CD8-positive, alpha-beta memory T cell (primary cell): ENCODE measurements at regions of chr14 and their contacts with region 1.

Region 1: GRCh38 chr14:101809671-101810514 is 48.4 kb downstream of the PPP2R5C start:
- DNase-seq: peak; percentile 71 to 94 (median 92)
- H3K4me3 ChIP-seq: peak overlapping the region; percentile 94
- H3K4me3 Mint-ChIP-seq: peak overlapping the region; percentile 90 to 99 (median 95)
- H3K27ac ChIP-seq: peak overlapping the region; percentile 99
- H3K27ac Mint-ChIP-seq: peak overlapping the region; percentile 89 to 100 (median 98)
- H3K4me1 ChIP-seq: peaks cover 36% of the 10 kb centered on the region
- H3K4me1 Mint-ChIP-seq: peaks cover 45 to 71% (median 58%) of the 10 kb centered on the region in 3 donors
- H3K27me3 ChIP-seq: no peaks in the 10 kb centered on the region
- H3K27me3 Mint-ChIP-seq: peaks cover 0 to 2% of the 10 kb centered on the region in 2 donors

Region 2: GRCh38 chr14:101721951-101722661 is 87.8 kb before region 1 on chr14:
- CTCF ChIA-PET with region 1: interaction called, 3 read pairs
- POLR2A ChIA-PET with region 1: interaction called, 14 read pairs
- DNase-seq: peak; percentile 70 to 93 (median 89)
- H3K4me3 ChIP-seq: peak overlapping the region; percentile 42
- H3K4me3 Mint-ChIP-seq: peak overlapping the region; percentile 64 to 87 (median 78)
- H3K27ac ChIP-seq: peak overlapping the region; percentile 88
- H3K27ac Mint-ChIP-seq: peak overlapping the region; percentile 95 to 99 (median 97)
- H3K4me1 ChIP-seq: peaks cover 56% of the 10 kb centered on the region
- H3K4me1 Mint-ChIP-seq: peaks cover 52 to 79% (median 77%) of the 10 kb centered on the region in 3 donors
- H3K27me3 ChIP-seq: no peaks in the 10 kb centered on the region
- H3K27me3 Mint-ChIP-seq: peaks cover 0 to 2% of the 10 kb centered on the region in 2 donors

Region 3: GRCh38 chr14:101761032-101761880 is 48.6 kb before region 1 on chr14 and contains the start of gene PPP2R5C:
- CTCF ChIA-PET with region 1: interaction called, 6 read pairs
- POLR2A ChIA-PET with region 1: interaction called, 15 read pairs
- DNase-seq: peak; percentile 85 to 93 (median 87)
- H3K4me3 ChIP-seq: peak within 1 kb of the TSS; percentile 93
- H3K4me3 Mint-ChIP-seq: peak within 1 kb of the TSS; percentile 92 to 100 (median 97)
- H3K27ac ChIP-seq: peak within 1 kb of the TSS; percentile 75
- H3K27ac Mint-ChIP-seq: peak within 1 kb of the TSS; percentile 87 to 98 (median 96)
- H3K4me1 ChIP-seq: peaks cover 34% of the 10 kb centered on the region
- H3K4me1 Mint-ChIP-seq: peaks cover 38 to 64% (median 44%) of the 10 kb centered on the region in 3 donors
- H3K27me3 ChIP-seq: no peaks in the 10 kb centered on the region
- H3K27me3 Mint-ChIP-seq: peaks cover 0 to 4% of the 10 kb centered on the region in 2 donors
- total RNA-seq, gene PPP2R5C: 278 to 307 TPM

Region 4: DNA sequence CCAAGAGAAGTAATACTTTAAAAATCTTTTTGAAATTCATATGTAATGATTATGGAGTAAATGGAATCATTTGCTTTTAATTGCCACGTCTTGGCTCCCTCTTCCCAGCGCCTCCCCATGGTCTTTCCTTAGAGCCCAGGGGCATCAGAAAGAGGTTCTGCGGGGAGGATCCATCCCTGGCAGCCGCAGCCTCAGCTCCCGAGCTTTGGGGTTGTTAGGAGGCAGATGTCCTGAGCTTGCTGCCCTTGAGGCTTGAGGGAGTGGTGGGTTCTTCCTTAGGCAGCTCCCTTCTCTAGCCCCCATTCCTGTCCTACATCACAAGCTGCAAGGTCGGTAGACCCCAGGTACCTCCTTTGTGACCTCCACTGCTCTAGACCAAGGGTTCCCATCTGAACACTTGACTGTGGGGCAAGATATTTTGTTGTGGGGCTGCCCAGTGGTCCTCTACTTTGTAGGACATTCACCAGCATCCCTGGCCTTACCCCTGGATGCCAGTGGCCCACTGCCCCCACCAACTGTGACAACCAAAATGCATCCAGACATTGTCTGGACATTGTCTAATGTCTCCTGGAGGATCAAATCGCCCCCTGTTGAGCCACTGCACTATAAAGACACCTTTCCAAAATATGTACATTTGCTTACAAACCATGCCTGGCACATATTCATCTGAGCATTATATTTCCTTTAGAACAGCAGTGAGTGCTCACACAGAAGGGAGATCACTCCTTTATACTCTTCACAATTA is 42.1 kb before region 1 on chr14:
- CTCF ChIA-PET with region 1: interaction called, 14 read pairs
- POLR2A ChIA-PET with region 1: interaction called, 16 read pairs
- DNase-seq: no peak
- H3K4me3 ChIP-seq: no peak overlapping the region
- H3K4me3 Mint-ChIP-seq: no peak overlapping the region
- H3K27ac ChIP-seq: no peak overlapping the region
- H3K27ac Mint-ChIP-seq: peak overlapping the region in 4 of 8 donors; percentile 36 to 85 (median 44)
- H3K4me1 ChIP-seq: peaks cover 30% of the 10 kb centered on the region
- H3K4me1 Mint-ChIP-seq: peaks cover 34 to 75% (median 46%) of the 10 kb centered on the region in 3 donors
- H3K27me3 ChIP-seq: no peaks in the 10 kb centered on the region
- H3K27me3 Mint-ChIP-seq: peaks cover 0 to 3% of the 10 kb centered on the region in 2 donors

Region 5: GRCh38 chr14:101791919-101792572 is 17.8 kb before region 1 on chr14:
- CTCF ChIA-PET with region 1: interaction called, 3 read pairs
- POLR2A ChIA-PET with region 1: interaction called, 17 read pairs
- DNase-seq: peak in 2 of 5 donors; percentile 37 to 39
- H3K4me3 ChIP-seq: peak overlapping the region; percentile 44
- H3K4me3 Mint-ChIP-seq: peak overlapping the region; percentile 70 to 86 (median 79)
- H3K27ac ChIP-seq: no peak overlapping the region
- H3K27ac Mint-ChIP-seq: peak overlapping the region; percentile 53 to 95 (median 90)
- H3K4me1 ChIP-seq: peaks cover 7% of the 10 kb centered on the region
- H3K4me1 Mint-ChIP-seq: peaks cover 34 to 57% (median 37%) of the 10 kb centered on the region in 3 donors
- H3K27me3 ChIP-seq: no peaks in the 10 kb centered on the region
- H3K27me3 Mint-ChIP-seq: no peaks in the 10 kb centered on the region